ENCODE measurements at regions of chrX and their contacts with region 1.

Region 1: DNA sequence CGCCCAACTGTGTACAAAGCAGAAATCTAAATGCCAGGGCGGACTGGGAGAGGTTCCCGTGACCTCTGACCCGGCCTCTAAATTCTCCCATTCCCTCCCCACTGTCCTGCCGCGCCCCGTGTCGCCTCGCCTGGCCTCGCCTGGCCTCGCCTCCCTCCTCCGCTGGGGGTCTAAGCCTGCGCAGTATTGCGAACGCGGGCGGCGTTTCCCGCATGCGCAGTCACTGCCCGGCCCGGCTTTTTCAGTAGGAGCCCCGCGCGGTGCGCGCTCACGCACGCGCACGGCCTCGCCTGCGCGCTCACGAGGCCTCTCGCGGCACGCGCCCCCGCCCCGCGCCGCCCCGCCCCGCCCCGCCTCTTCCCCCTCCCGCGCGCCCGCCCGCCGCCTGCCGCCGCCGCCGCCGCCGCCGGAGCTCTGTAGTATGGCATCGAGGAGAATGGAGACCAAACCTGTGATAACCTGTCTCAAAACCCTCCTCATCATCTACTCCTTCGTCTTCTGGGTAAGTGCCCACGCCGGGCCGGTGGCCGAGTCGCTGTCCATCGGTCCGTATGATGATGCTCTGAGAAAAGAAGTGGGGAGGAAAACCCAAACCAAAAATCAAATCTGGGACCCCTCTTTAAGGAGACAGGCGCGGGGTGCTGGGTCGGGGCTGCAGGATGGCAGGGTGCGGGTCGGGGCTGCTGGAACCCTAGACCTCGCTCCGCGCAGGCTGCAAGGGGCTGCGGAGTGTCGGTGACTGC is at the start of gene TSPAN7:
- DNase-seq: peak; percentile 56 to 77
- ATAC-seq: peak; percentile 70 to 78
- H3K4me3 ChIP-seq: peak within 1 kb of the TSS; percentile 69 to 73 (median 70)
- H3K27ac ChIP-seq: peak within 1 kb of the TSS; percentile 84 to 88 (median 86)
- H3K4me1 ChIP-seq: peaks cover 0 to 5% of the 10 kb centered on the region in 2 donors
- H3K27me3 ChIP-seq: no peaks in the 10 kb centered on the region
- CTCF ChIP-seq: no peak
- POLR2A ChIP-seq: peak in 1 of 2 donors; percentile 29
- total RNA-seq, gene TSPAN7: 38.1 to 288 (median 130) TPM

Region 2: DNA sequence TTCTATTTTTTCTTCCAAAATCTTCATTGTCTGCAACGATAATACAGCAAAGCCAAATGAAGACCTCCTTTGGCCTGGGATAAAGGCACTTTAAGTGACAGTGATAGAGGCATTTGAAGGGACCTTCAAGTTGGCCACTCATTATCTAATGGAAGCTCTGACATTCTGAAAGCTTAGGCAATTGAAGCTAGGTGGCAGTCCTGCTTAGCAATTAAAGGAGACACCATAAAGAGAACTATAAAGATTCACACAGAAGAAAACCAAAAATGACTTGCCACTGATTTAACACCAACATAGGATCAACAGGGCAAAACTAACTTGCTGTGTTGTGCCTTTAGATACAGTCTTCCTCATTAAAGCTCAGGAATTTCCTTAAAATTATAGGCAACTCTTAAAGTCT is 103.2 kb before region 1 on chrX:
- in situ Hi-C with region 1: loop called in 1 of 4 experiments (anchors 25 kb)
- intact Hi-C with region 1: no loop called
- DNase-seq: no peak
- ATAC-seq: peak; percentile 46 to 80
- H3K4me3 ChIP-seq: no peak overlapping the region
- H3K27ac ChIP-seq: no peak overlapping the region
- H3K4me1 ChIP-seq: no peaks in the 10 kb centered on the region
- H3K27me3 ChIP-seq: no peaks in the 10 kb centered on the region
- CTCF ChIP-seq: peak in 4 of 5 experiments; percentile 3 to 45 (median 29)
- POLR2A ChIP-seq: no peak

Region 3: DNA sequence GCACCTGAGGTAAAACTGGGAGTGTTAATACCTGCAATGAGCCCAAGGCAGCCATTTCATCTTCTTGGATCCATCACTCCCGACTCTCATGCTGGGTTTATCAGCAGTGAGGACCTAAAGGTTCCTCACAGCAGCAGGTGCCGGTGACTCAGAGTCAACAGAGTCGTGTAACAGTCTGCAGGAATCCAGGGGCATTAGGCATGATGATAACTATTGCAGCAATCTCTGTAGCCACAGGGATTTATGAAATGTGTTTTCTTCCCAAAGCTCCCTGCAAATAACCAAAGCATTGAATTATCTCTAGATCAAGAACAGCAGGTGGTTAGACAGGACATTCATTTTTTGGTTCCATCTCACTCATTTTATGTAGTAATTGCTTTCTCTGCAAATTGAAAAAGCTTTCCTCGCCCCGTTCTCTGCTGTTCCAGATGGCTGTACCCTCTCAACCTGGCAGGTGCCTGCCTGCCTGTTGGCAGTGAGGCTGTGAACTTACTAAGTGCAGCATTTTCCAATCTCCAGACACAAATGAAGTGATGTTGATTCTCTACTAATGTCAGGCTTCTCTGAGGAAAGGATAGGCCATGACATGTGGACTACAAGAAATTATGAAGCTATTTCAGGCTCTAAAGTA is 48.1 kb before region 1 on chrX:
- in situ Hi-C with region 1: no loop called
- intact Hi-C with region 1: loop called (anchors 2 kb)
- DNase-seq: peak; percentile 23 to 43
- ATAC-seq: peak; percentile 78 to 93
- H3K4me3 ChIP-seq: no peak overlapping the region
- H3K27ac ChIP-seq: peak overlapping the region; percentile 38 to 66 (median 55)
- H3K4me1 ChIP-seq: peaks cover 4 to 9% of the 10 kb centered on the region in 2 donors
- H3K27me3 ChIP-seq: no peaks in the 10 kb centered on the region
- CTCF ChIP-seq: no peak
- POLR2A ChIP-seq: no peak

Region 4: GRCh38 chrX:38612281-38612680 is 51.0 kb after region 1 on chrX:
- in situ Hi-C with region 1: no loop called
- intact Hi-C with region 1: loop called (anchors 5 kb)
- DNase-seq: peak; percentile 50 to 64
- ATAC-seq: peak; percentile 92 to 94
- H3K4me3 ChIP-seq: peak overlapping the region; percentile 29 to 45 (median 40)
- H3K27ac ChIP-seq: peak overlapping the region; percentile 81 to 90 (median 88)
- H3K4me1 ChIP-seq: peaks cover 7 to 34% of the 10 kb centered on the region in 2 donors
- H3K27me3 ChIP-seq: no peaks in the 10 kb centered on the region
- CTCF ChIP-seq: no peak
- POLR2A ChIP-seq: peak; percentile 39 to 67

Region 5: GRCh38 chrX:38654302-38654701 is 93.0 kb after region 1 on chrX:
- in situ Hi-C with region 1: no loop called
- intact Hi-C with region 1: loop called (anchors 2 kb)
- DNase-seq: no peak
- ATAC-seq: no peak
- H3K4me3 ChIP-seq: no peak overlapping the region
- H3K27ac ChIP-seq: peak overlapping the region; percentile 47 to 84 (median 64)
- H3K4me1 ChIP-seq: peaks cover 28% of the 10 kb centered on the region in 2 donors
- H3K27me3 ChIP-seq: no peaks in the 10 kb centered on the region
- CTCF ChIP-seq: peak; percentile 38 to 57 (median 45)
- POLR2A ChIP-seq: no peak